Mammary epithelial cell (primary cell): ENCODE measurements at regions of chr11 and their contacts with region 1.

Region 1: GRCh38 chr11:124778281-124778680 is 16.2 kb upstream of the ESAM start:
- DNase-seq: no peak
- H3K4me3 ChIP-seq: no peak overlapping the region
- H3K27ac ChIP-seq: no peak overlapping the region
- H3K4me1 ChIP-seq: no peaks in the 10 kb centered on the region
- H3K27me3 ChIP-seq: no peaks in the 10 kb centered on the region
- CTCF ChIP-seq: peak; percentile 25 to 33

Region 2: DNA sequence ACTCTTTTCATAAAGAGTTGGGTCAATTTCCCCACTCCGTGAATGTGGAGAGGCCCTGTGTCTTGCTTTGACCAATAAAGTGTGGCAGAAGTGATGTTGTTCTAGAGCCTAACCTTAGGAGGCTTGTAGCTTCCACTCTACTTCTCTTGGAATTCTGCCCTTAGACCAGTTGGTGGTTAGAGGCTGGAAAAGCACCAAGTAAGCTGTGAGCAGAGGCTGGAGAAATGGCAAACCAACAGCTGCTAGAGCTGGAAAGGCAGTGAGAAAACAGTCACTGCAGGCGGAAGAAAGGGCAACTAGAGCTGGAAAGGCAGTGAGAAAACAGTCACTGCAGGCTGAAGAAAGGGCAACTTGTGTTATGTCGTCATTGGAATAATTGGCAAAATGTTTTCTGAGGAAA is 51.7 kb after region 1 on chr11:
- CTCF ChIA-PET with region 1: no interaction called
- dilution Hi-C with region 1: loop called (anchors 5 kb)
- in situ Hi-C with region 1: no loop called
- intact Hi-C with region 1: no loop called
- DNase-seq: no peak
- H3K4me3 ChIP-seq: no peak overlapping the region
- H3K27ac ChIP-seq: no peak overlapping the region
- H3K4me1 ChIP-seq: peaks cover 4% of the 10 kb centered on the region
- H3K27me3 ChIP-seq: peaks cover 42% of the 10 kb centered on the region
- CTCF ChIP-seq: no peak

Region 3: GRCh38 chr11:124961972-124962609 is 183.8 kb after region 1 on chr11:
- CTCF ChIA-PET with region 1: no interaction called
- dilution Hi-C with region 1: no loop called
- in situ Hi-C with region 1: no loop called
- intact Hi-C with region 1: no loop called
- DNase-seq: peak; percentile 67
- H3K4me3 ChIP-seq: no peak overlapping the region
- H3K27ac ChIP-seq: no peak overlapping the region
- H3K4me1 ChIP-seq: no peaks in the 10 kb centered on the region
- H3K27me3 ChIP-seq: no peaks in the 10 kb centered on the region
- CTCF ChIP-seq: peak; percentile 73 to 76